ENCODE measurements at regions of chr3 and their contacts with region 1.

Region 1: DNA sequence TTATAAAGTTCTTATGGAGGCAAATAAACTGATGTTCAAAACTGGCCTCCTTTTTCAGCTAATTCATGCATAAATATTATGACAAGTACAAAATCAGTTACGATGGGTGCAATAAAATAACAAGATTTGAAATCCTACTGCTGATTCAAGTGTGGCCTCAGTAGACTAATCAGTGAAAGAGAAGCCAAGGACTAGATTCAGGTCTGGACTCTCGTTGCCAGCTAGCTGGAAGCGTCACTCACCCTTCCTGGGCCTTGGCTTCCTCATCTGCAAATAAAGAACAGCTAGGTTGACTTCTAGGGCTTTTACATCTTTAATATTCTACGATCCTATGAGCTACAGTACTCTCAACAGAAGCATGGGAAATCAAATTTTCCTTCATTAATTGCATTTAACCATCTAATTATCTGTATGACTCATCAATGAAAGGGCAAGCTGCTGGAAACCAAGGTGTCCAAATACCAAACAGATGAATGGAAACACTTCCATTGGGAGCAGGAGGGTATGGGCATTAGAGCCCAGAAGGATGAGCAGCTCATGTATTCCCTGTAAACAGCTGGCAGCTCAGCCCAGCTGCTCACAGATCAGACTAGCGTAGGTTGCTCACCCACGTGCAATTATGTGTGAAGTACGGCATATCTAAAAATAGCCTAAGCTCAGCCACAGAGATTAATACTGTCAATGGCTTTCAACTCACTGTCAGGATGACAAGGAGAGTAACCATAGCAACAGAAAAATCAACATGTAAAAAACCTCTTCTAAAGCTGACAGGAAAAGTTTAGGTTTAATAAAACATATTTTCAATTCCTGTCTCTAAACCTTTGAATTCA is 294.8 kb downstream of the PLCL2 start:
- DNase-seq: no peak
- H3K4me3 Mint-ChIP-seq: no peak overlapping the region
- H3K27ac Mint-ChIP-seq: no peak overlapping the region
- H3K4me1 Mint-ChIP-seq: peaks cover 44% of the 10 kb centered on the region
- H3K27me3 Mint-ChIP-seq: peaks cover 12% of the 10 kb centered on the region

Region 2: GRCh38 chr3:16842272-16843270 is 337.0 kb before region 1 on chr3:
- intact Hi-C with region 1: loop called (anchors 5 kb)
- DNase-seq: peak; percentile 73
- H3K4me3 Mint-ChIP-seq: peak overlapping the region; percentile 77
- H3K27ac Mint-ChIP-seq: peak overlapping the region; percentile 99
- H3K4me1 Mint-ChIP-seq: peaks cover 71% of the 10 kb centered on the region
- H3K27me3 Mint-ChIP-seq: peaks cover 3% of the 10 kb centered on the region

Region 3: DNA sequence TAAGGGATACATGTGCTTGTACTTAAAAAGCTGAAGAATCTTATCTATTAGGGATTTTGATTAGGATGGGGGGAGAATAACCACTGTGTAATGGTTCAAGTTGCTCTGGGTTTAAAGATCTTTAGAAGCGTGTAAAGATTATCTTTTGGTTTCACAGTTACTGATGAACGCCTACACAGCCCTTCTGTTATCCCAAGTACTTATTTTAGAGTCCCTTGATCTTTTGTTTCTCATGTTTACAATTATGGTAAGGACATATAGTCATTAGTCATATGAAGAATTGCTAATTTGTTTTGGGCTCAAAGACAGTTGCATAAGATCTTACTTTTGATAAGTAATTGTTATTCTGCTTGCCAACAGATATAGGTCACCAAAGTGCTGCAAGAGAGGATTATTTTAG is 134.7 kb before region 1 on chr3:
- intact Hi-C with region 1: loop called (anchors 1 kb)
- DNase-seq: no peak
- H3K4me3 Mint-ChIP-seq: no peak overlapping the region
- H3K27ac Mint-ChIP-seq: peak overlapping the region; percentile 40
- H3K4me1 Mint-ChIP-seq: peaks cover 57% of the 10 kb centered on the region
- H3K27me3 Mint-ChIP-seq: no peaks in the 10 kb centered on the region

Region 4: GRCh38 chr3:17088602-17089313 is 90.8 kb before region 1 on chr3:
- intact Hi-C with region 1: loop called (anchors 2 kb)
- DNase-seq: no peak
- H3K4me3 Mint-ChIP-seq: peak overlapping the region; percentile 27
- H3K27ac Mint-ChIP-seq: peak overlapping the region; percentile 25
- H3K4me1 Mint-ChIP-seq: peaks cover 39% of the 10 kb centered on the region
- H3K27me3 Mint-ChIP-seq: no peaks in the 10 kb centered on the region

Region 5: DNA sequence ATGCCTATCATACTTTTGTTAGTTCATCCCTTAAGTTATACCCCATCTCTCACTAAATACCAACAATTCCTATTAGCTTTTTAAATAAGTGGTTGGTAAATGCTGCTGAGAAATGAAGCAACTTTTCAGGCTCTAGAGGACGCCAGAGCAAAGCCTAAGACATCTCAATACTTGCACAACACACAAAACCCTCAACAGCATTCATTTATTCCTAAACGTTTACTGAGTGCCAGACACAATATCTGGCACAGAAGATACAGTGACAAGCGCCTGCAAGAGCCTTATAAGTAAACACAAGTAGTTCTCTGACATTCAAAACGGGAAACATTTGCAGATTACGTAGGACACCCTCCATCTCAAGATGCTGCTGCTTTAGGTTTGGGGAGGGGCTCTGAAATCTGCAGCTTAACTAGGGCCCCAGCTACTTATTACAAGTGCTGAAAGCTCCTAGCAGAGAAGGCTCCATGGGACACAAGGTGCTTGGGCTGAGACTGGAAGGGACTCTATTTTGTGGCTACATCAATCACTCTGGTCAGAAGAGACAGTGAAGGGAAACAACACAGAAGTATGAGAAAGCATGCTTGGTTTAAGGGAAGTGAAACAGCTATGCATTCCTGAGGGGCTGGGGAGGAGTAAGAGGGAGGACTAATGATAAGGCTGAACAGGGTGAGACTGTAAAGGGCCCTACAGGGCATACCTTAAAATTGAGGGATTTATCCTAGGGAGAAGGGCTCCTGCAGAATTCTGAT is 16.4 kb after region 1 on chr3:
- intact Hi-C with region 1: loop called (anchors 1 kb)
- DNase-seq: no peak
- H3K4me3 Mint-ChIP-seq: no peak overlapping the region
- H3K27ac Mint-ChIP-seq: no peak overlapping the region
- H3K4me1 Mint-ChIP-seq: peaks cover 17% of the 10 kb centered on the region
- H3K27me3 Mint-ChIP-seq: peaks cover 1% of the 10 kb centered on the region

Region 6: DNA sequence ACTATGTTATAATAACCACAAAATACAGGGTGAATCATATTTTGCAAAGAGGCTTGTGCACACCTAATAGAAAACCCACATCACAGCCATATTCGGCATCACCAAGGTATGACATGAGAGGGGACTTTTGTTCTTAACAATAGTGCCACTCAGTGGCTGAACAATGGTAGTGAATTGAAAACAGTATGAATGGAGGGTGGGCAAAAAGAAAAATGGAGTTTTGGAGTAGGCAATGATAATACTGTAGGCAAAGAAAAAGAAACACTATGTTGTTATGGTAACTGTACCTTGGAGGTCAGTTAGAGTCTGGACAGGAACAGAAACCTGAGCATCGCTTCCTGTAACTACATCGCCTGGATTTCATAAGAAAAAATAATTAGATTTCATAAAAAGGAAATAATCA is 53.8 kb after region 1 on chr3:
- intact Hi-C with region 1: loop called (anchors 1 kb)
- DNase-seq: peak; percentile 27
- H3K4me3 Mint-ChIP-seq: no peak overlapping the region
- H3K27ac Mint-ChIP-seq: no peak overlapping the region
- H3K4me1 Mint-ChIP-seq: peaks cover 13% of the 10 kb centered on the region
- H3K27me3 Mint-ChIP-seq: no peaks in the 10 kb centered on the region

Measured in activated T-helper 1 cell treated with anti-CD3 and anti-CD28 coated beads, Interleukin-12 subunit alpha, Interleukin-12 subunit beta, Interleukin-2, Interleukin-4 antibody, amounts not matched to agents 30 ng/mL and 10 ng/mL and 1 ng/mL, durations not matched to agents 14 hours and 24 hours and 36 hours (primary cell).